ENCODE measurements at regions of chr1 and their contacts with region 1.

Region 1: GRCh38 chr1:58816072-58816746 is 32.4 kb upstream of the JUN start:
- DNase-seq: peak; percentile 96
- ATAC-seq: peak; percentile 92

Region 2: DNA sequence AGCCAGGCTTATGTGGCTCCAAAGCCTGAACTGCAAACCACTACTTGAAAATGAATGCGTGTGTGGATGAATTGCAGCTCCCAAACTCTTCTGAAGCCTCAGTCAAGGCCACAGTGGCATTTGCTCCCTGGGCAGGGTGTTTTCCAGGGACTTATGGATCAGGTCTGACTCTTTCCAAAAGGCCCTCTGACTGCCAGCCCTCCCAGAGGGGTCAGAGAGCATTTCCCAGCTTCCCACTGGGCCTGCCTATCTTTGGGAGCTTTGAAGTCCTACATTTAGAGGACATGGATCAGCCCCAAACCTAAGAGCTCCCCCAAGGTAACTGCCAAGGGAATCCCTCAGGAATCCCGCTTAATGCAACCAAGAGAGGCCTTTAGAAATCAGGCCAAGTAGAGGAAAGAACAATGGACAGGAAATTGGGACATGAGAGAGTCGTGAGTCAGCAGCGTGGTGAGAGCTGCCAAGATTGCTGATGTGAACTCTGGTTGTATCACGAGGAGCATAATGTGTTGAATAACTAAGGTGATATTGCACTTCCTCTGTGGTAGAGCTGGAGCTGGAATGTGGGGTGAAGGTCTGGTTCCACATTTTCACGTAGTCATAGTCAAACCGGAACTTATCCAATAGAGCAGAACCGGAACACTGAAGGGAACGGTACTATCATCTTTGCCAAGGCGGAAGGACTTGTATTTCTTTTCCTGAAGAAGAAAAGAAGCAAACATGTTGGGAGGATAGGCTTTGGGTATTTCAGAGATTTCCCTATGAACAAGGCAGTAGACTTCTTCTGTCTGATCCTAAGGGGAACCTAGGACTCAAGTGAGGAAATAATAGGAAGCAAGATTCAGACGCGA is 67.1 kb after region 1 on chr1:
- intact Hi-C with region 1: loop called (anchors 10 kb)
- DNase-seq: peak; percentile 78
- ATAC-seq: peak; percentile 57